Mammary epithelial cell (primary cell): ENCODE measurements at regions of chr2 and their contacts with region 1.

Region 1: GRCh38 chr2:84946204-84947009 is 24.6 kb upstream of the KCMF1 start:
- DNase-seq: peak; percentile 99
- H3K4me3 ChIP-seq: peak overlapping the region in 1 of 3 experiments; percentile 19
- H3K27ac ChIP-seq: peak overlapping the region; percentile 98
- H3K4me1 ChIP-seq: peaks cover 33% of the 10 kb centered on the region
- H3K27me3 ChIP-seq: no peaks in the 10 kb centered on the region
- CTCF ChIP-seq: no peak

Region 2: GRCh38 chr2:84970868-84971509 is 24.6 kb after region 1 on chr2 and contains the start of gene KCMF1:
- CTCF ChIA-PET with region 1: no interaction called
- dilution Hi-C with region 1: no loop called
- in situ Hi-C with region 1: no loop called
- intact Hi-C with region 1: loop called (anchors 1 kb)
- DNase-seq: peak; percentile 77
- H3K4me3 ChIP-seq: peak within 1 kb of the TSS; percentile 76 to 94 (median 81)
- H3K27ac ChIP-seq: peak within 1 kb of the TSS; percentile 93
- H3K4me1 ChIP-seq: peaks cover 4% of the 10 kb centered on the region
- H3K27me3 ChIP-seq: no peaks in the 10 kb centered on the region
- CTCF ChIP-seq: no peak
- total RNA-seq, gene KCMF1: 73.2 to 94.7 TPM